ENCODE measurements at regions of chr6 and their contacts with region 1.

Region 1: GRCh38 chr6:111799576-111800258 is 73.5 kb downstream of the FYN start:
- DNase-seq: no peak
- H3K4me3 ChIP-seq: no peak overlapping the region
- H3K27ac ChIP-seq: no peak overlapping the region
- H3K4me1 ChIP-seq: peaks cover 0 to 14% (median 7%) of the 10 kb centered on the region in 4 experiments; a peak in 5 of 7 replicates
- H3K27me3 ChIP-seq: no peaks in the 10 kb centered on the region
- CTCF ChIP-seq: peak in 2 of 3 experiments; percentile 65 to 74; a peak in 3 of 4 replicates
- EP300 ChIP-seq: no peak
- POLR2A ChIP-seq: no peak
- RAD21 ChIP-seq: peak; percentile 33 to 41; a peak in 2 of 4 replicates

Region 2: DNA sequence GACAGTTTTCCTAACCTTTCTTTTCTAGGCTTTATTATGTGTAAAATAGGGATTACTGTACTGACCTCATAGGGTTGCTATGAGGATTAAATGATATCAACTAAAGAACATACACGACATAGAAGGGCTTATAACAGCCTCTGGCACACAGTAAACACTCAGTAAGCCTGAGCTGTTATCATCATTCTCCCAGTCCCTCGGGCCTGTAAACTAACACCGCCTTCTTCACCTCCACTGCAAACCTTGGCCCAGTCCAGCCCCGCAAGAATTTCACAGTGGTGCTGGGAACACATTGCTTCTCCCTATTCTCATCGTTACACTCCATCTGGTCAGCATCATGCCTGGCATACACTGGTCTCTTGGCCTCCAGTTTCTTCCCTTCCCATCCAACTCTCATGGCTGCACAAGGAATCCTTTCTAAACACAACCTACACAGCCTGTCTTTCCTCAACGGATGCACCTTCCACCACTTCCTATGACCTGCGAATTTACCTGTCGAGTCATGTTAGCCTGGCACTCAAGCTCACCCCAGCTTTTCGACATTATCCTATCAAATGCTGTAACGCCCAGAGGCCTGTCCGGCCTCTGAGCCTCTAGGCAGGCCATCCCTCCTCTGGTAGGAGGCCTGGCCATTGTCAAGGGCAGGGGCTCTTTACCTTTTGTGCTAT is 18.5 kb before region 1 on chr6:
- CTCF ChIA-PET with region 1: interaction called, 21 read pairs
- POLR2A ChIA-PET with region 1: interaction called, 3 read pairs
- DNase-seq: no peak
- H3K4me3 ChIP-seq: no peak overlapping the region
- H3K27ac ChIP-seq: 0 out of 2 replicates have a peak overlapping the region, but pooled peaks have one; percentile 13
- H3K4me1 ChIP-seq: no peaks in the 10 kb centered on the region
- H3K27me3 ChIP-seq: no peaks in the 10 kb centered on the region
- CTCF ChIP-seq: no peak
- EP300 ChIP-seq: no peak
- POLR2A ChIP-seq: no peak
- RAD21 ChIP-seq: no peak

Region 3: DNA sequence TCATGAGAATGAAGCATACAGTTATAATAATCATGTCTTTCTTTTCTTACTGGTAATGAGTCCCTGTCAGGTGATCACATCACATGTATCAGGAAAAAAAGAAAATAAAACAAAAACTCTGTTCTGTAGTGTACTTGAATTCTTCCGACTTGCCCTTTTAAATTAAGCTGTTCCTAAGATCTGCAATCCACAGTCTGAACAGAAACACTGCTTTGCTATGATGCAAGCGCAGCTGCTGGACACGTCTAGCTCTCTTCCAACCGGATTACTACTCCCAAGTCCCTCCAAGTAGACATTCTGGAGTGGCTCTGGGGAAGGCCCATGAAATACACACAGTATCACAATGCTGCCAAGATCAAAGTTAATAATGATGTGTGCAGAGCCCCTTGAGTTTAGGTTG is 10.1 kb before region 1 on chr6:
- CTCF ChIA-PET with region 1: interaction called, 21 read pairs
- POLR2A ChIA-PET with region 1: no interaction called
- DNase-seq: no peak
- H3K4me3 ChIP-seq: no peak overlapping the region
- H3K27ac ChIP-seq: no peak overlapping the region
- H3K4me1 ChIP-seq: peaks cover 0 to 6% (median 3%) of the 10 kb centered on the region in 4 experiments; a peak in 2 of 7 replicates
- H3K27me3 ChIP-seq: no peaks in the 10 kb centered on the region
- CTCF ChIP-seq: no peak
- EP300 ChIP-seq: no peak
- POLR2A ChIP-seq: no peak
- RAD21 ChIP-seq: no peak

Region 4: GRCh38 chr6:111837641-111838500 is 38.2 kb after region 1 on chr6:
- CTCF ChIA-PET with region 1: no interaction called
- POLR2A ChIA-PET with region 1: no interaction called
- DNase-seq: no peak
- H3K4me3 ChIP-seq: no peak overlapping the region
- H3K27ac ChIP-seq: no peak overlapping the region
- H3K4me1 ChIP-seq: peaks cover 3 to 12% (median 7%) of the 10 kb centered on the region in 4 experiments
- H3K27me3 ChIP-seq: no peaks in the 10 kb centered on the region
- CTCF ChIP-seq: no peak
- EP300 ChIP-seq: no peak
- POLR2A ChIP-seq: no peak
- RAD21 ChIP-seq: no peak

Measured in H1 (cell line).